SK-N-SH (cell line): ENCODE measurements at regions of chr3 and their contacts with region 1.

Region 1: DNA sequence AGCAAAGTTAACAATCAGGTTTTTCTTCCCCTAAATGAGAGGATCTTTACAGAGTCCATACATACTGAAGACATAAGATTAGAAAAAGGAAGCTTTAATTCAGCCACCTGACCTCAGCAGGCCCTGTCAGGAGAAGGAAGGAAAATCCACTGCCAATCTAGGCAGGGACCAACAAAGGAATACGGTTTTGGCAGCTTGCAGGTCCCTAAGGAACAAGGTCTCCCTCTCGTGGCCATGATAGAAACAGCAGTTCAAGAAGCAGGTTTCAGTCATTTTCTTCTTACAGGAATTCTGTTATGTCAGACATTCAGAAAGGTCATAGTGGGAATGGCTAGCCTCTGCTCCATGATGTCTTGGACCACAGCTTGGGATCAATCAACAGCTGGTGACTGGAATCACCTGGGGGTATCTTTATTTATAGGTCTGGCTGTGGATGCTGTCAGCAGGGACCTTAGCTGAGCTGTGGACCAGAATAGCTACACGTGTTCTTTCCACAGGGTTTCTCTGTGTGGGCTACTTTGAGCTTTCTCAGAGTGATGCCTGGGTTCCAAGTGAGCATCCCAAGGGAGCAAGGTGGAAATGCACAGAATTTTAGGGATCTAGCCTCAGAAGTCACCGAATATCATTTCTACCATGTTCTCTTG is 9.4 kb upstream of the CMSS1 start:
- DNase-seq: peak; percentile 53
- H3K4me3 ChIP-seq: no peak overlapping the region; a peak in 1 of 4 replicates
- H3K27ac ChIP-seq: no peak overlapping the region
- H3K4me1 ChIP-seq: no peaks in the 10 kb centered on the region
- H3K27me3 ChIP-seq: no peaks in the 10 kb centered on the region
- CTCF ChIP-seq: peak; percentile 82
- EP300 ChIP-seq: no peak
- RAD21 ChIP-seq: peak; percentile 59

Region 2: DNA sequence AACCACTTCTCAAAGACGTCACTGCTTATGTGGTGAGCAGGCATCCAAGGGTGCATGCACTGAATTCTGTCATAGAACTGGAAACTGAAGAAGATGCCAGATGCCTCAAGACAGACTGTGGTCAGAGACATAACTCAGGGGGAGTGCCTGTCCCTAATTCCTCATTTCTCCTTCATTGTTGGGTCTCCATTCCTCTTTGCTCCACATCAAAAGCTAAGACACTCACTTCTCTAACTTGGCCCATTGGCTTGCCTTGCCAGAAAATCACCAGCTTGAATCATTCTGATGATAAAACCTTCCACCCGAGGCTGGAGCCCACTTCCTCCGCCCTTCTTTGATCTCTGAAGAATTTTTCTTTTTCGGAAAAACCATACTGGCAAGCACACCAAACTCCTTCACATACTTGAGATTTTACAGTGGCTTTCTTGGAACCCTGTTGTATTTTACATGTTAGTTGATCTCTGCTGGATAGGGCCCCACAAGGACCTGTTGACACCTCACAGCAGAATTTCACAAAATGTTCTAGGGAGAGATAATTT is 100.0 kb before region 1 on chr3:
- CTCF ChIA-PET with region 1: no interaction called
- POLR2A ChIA-PET with region 1: no interaction called
- DNase-seq: no peak
- H3K4me3 ChIP-seq: no peak overlapping the region
- H3K27ac ChIP-seq: no peak overlapping the region
- H3K4me1 ChIP-seq: no peaks in the 10 kb centered on the region
- H3K27me3 ChIP-seq: no peaks in the 10 kb centered on the region; the same call in 1 of the 2 replicates
- CTCF ChIP-seq: no peak
- EP300 ChIP-seq: no peak
- RAD21 ChIP-seq: no peak

Region 3: GRCh38 chr3:99789011-99789721 is 19.1 kb before region 1 on chr3:
- CTCF ChIA-PET with region 1: interaction called, 20 read pairs
- POLR2A ChIA-PET with region 1: no interaction called
- DNase-seq: peak; percentile 62
- H3K4me3 ChIP-seq: no peak overlapping the region; a peak in 1 of 4 replicates
- H3K27ac ChIP-seq: no peak overlapping the region
- H3K4me1 ChIP-seq: no peaks in the 10 kb centered on the region; a peak in 1 of 4 replicates
- H3K27me3 ChIP-seq: no peaks in the 10 kb centered on the region
- CTCF ChIP-seq: peak; percentile 76
- EP300 ChIP-seq: no peak
- RAD21 ChIP-seq: peak; percentile 77

Region 4: GRCh38 chr3:99825004-99825640 is 16.8 kb after region 1 on chr3:
- CTCF ChIA-PET with region 1: interaction called, 22 read pairs
- POLR2A ChIA-PET with region 1: no interaction called
- DNase-seq: no peak
- H3K4me3 ChIP-seq: no peak overlapping the region
- H3K27ac ChIP-seq: peak overlapping the region; percentile 29 to 63; a peak in 3 of 4 replicates
- H3K4me1 ChIP-seq: peaks cover 0 to 9% of the 10 kb centered on the region in 2 experiments
- H3K27me3 ChIP-seq: no peaks in the 10 kb centered on the region
- CTCF ChIP-seq: no peak
- EP300 ChIP-seq: peak in 1 of 2 experiments; percentile 60; a peak in 1 of 4 replicates
- RAD21 ChIP-seq: no peak

Region 5: DNA sequence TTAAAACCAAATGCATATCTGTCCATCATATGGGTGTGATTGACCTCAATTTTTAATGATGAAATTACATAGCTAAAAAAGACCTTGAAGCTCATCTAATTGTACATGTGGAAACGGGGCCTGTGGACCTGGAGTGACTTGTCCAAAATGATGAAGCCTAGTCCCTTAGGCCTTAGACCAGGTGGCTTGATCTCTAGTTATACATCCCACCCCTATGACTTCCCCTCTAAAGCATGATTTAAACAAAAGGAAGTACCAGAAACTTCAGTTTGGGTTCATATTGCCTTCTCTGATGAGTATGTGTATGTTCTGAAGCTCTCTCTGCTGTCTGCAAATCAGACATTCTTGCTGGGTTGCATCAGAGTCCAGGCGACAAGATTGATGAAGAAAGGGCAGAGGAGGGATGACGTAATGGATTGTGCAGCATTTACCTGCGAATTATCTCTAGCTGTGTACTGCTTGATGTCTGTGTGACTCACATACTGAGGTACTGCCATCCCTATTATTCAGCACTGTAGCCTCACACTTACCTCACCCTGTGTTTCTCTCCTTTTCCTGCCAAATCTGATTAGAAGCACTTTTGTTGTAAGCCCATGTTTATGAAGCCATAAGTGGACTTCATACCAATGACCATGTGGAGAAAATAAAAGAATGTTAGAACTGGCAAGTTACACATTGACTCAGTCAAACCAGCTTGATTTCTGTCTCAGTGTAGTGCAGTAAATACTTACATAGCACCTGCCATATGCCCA is 194.5 kb after region 1 on chr3:
- CTCF ChIA-PET with region 1: no interaction called
- POLR2A ChIA-PET with region 1: no interaction called
- DNase-seq: no peak
- H3K4me3 ChIP-seq: no peak overlapping the region
- H3K27ac ChIP-seq: peak overlapping the region; percentile 55 to 76; a peak in 3 of 4 replicates
- H3K4me1 ChIP-seq: peaks cover 7 to 29% of the 10 kb centered on the region in 2 experiments
- H3K27me3 ChIP-seq: no peaks in the 10 kb centered on the region
- CTCF ChIP-seq: no peak
- EP300 ChIP-seq: peak in 1 of 2 experiments; percentile 97; a peak in 2 of 4 replicates
- RAD21 ChIP-seq: no peak

Region 6: GRCh38 chr3:100169201-100169920 is 361.1 kb after region 1 on chr3:
- CTCF ChIA-PET with region 1: no interaction called
- POLR2A ChIA-PET with region 1: no interaction called
- DNase-seq: peak; percentile 48
- H3K4me3 ChIP-seq: no peak overlapping the region
- H3K27ac ChIP-seq: peak overlapping the region in 1 of 2 experiments; percentile 62; a peak in 1 of 4 replicates
- H3K4me1 ChIP-seq: peaks cover 0 to 22% of the 10 kb centered on the region in 2 experiments; a peak in 2 of 4 replicates
- H3K27me3 ChIP-seq: no peaks in the 10 kb centered on the region
- CTCF ChIP-seq: no peak
- EP300 ChIP-seq: no peak
- RAD21 ChIP-seq: no peak